ENCODE measurements at regions of chr3 and their contacts with region 1.

Region 1: DNA sequence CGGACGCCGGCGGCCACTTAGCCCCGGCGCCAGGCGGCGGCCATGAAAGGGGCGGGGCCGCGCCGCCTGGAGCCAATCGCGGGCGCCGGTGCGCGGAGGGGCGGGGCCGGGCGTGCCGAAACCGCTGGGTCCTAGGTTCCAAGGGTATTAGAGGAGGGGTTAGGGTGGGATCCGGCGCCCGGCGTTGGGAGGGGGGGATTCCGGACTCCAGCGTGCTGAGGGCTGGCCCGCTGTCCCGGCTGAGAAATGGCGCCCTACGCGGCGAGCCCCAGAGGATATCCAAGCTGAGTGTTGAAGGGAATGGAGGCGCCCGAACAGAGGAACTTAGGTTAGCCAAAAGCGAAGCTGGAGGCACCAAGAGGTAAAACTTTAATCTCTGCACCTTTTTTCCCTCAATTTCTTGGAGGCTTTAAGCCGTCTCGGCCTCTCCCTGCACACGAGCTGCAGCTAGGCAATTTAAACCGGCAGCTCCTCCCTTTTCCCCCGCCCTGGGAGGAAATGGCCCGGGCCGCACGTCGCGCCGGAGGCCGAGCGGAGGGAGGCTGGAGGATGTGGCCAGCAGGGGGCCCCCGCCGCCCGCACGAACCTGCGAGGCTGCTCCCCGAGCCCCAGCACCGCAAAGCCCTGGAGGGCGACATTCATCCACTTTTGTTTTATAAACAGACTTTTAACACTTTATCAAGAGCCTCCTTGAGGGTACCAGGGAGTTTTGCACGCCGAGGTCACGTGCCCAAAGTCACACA is at the start of gene XXYLT1:
- DNase-seq: peak; percentile 92
- H3K4me3 Mint-ChIP-seq: peak within 1 kb of the TSS; percentile 82
- H3K27ac Mint-ChIP-seq: peak within 1 kb of the TSS; percentile 85
- H3K4me1 Mint-ChIP-seq: peaks cover 22% of the 10 kb centered on the region
- H3K27me3 Mint-ChIP-seq: no peaks in the 10 kb centered on the region
- total RNA-seq, gene XXYLT1: 5.0 to 5.6 TPM

Region 2: DNA sequence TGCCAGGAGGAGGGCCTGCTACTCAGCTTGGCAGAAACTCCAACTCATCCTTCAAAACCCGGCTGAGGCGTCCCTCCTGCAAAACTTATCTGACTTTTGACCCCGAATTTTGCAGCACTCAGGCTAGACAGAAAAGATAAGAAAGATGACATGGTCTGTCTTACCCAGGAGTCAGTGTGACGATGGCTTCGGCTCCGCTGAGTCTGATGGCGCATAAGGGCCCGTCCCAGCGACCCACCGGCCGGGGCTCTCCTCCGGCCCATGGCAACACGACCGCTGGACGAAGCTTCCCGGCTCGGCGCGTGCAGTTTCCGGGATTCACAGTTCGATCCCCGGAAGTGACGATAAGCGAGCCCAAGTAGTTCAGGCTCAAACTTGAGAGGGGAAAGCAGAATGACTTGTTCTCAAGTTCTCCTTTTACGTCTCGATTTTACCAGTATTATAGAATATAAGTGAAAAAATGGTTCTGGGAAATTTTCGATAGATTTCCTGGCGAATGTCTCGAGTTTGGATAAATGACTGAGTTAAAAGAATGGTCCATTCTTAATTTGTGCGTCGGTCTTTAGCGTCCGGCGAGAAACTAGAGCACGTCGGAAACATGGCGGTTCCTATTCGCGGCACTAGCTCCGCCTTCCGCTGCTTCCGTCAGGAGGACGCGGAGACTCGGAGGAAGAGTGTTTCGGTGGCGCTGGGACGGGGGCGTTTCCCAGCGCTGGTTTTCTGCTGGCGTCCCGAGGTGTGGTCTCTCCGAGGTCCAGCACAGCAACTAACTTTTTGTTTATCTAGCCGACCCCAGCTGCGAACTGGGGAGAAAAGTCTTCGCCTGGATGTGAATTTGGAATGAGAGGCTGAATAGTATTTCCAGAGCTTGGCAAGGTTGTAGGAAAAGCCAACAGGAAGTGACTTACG is 599.1 kb before region 1 on chr3 and contains the start of gene LSG1:
- CTCF ChIA-PET with region 1: interaction called, 32 read pairs
- POLR2A ChIA-PET with region 1: interaction called, 10 read pairs
- DNase-seq: peak; percentile 91
- H3K4me3 Mint-ChIP-seq: peak within 1 kb of the TSS; percentile 96
- H3K27ac Mint-ChIP-seq: peak within 1 kb of the TSS; percentile 93
- H3K4me1 Mint-ChIP-seq: peaks cover 55% of the 10 kb centered on the region
- H3K27me3 Mint-ChIP-seq: peaks cover 3% of the 10 kb centered on the region
- total RNA-seq, gene LSG1: 24.7 to 26.5 TPM

Region 3: DNA sequence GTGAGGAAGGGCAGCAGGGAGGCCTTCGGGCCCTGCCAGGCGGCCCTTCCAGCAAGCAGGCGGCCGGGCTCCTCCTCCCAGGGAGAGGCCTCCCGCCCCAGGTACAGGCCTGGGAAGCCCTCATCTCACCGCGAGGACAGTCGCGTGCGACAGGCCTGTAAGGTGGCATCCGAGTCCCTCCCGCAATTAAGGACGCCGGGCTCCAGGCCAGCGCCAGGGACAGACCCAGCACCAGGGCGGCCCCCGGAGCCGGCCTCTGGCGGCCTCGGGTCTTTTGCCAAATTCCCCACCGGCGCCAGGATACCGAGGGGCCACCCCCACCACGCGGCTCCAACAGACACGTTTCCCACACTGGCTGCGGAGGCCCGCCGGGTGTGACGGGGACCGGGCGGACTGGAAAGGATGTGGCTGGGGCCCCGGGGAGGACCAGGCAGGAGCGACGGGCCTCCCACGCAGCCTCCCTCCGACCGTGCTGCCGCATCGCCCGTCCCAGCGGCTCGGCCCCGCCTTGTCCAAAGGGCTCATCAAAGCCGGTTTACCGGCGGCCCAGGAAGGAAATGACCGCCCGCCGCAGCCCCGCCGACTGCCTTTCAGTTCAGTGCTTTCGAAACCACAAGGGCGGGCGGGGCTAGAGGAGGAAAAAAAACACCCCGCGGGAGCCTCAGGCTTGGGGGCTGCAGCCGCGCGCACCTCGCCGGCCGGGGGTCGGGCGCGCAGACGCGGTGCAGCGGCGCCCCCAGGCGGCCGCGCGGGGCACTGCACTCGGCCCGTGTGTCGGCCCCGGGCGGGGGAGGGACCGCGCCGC is 11.6 kb before region 1 on chr3:
- CTCF ChIA-PET with region 1: interaction called, 74 read pairs
- POLR2A ChIA-PET with region 1: interaction called, 20 read pairs
- DNase-seq: peak; percentile 84
- H3K4me3 Mint-ChIP-seq: peak overlapping the region; percentile 48
- H3K27ac Mint-ChIP-seq: no peak overlapping the region
- H3K4me1 Mint-ChIP-seq: peaks cover 24% of the 10 kb centered on the region
- H3K27me3 Mint-ChIP-seq: no peaks in the 10 kb centered on the region

Region 4: GRCh38 chr3:195442573-195443390 is 171.5 kb after region 1 on chr3 and contains the start of gene ACAP2:
- CTCF ChIA-PET with region 1: interaction called, 32 read pairs
- POLR2A ChIA-PET with region 1: interaction called, 9 read pairs
- DNase-seq: peak; percentile 99
- H3K4me3 Mint-ChIP-seq: peak within 1 kb of the TSS; percentile 94
- H3K27ac Mint-ChIP-seq: peak within 1 kb of the TSS; percentile 92
- H3K4me1 Mint-ChIP-seq: peaks cover 44% of the 10 kb centered on the region
- H3K27me3 Mint-ChIP-seq: no peaks in the 10 kb centered on the region
- total RNA-seq, gene ACAP2: 76.0 to 77.4 TPM

Region 5: GRCh38 chr3:195508185-195508584 is 236.9 kb after region 1 on chr3:
- CTCF ChIA-PET with region 1: interaction called, 36 read pairs
- POLR2A ChIA-PET with region 1: interaction called, 3 read pairs
- DNase-seq: no peak
- H3K4me3 Mint-ChIP-seq: no peak overlapping the region
- H3K27ac Mint-ChIP-seq: no peak overlapping the region
- H3K4me1 Mint-ChIP-seq: peaks cover 3% of the 10 kb centered on the region
- H3K27me3 Mint-ChIP-seq: no peaks in the 10 kb centered on the region

Region 6: GRCh38 chr3:195532834-195533233 is 261.5 kb after region 1 on chr3:
- CTCF ChIA-PET with region 1: interaction called, 194 read pairs
- POLR2A ChIA-PET with region 1: interaction called, 4 read pairs
- DNase-seq: no peak
- H3K4me3 Mint-ChIP-seq: no peak overlapping the region
- H3K27ac Mint-ChIP-seq: no peak overlapping the region
- H3K4me1 Mint-ChIP-seq: peaks cover 43% of the 10 kb centered on the region
- H3K27me3 Mint-ChIP-seq: no peaks in the 10 kb centered on the region

Region 7: DNA sequence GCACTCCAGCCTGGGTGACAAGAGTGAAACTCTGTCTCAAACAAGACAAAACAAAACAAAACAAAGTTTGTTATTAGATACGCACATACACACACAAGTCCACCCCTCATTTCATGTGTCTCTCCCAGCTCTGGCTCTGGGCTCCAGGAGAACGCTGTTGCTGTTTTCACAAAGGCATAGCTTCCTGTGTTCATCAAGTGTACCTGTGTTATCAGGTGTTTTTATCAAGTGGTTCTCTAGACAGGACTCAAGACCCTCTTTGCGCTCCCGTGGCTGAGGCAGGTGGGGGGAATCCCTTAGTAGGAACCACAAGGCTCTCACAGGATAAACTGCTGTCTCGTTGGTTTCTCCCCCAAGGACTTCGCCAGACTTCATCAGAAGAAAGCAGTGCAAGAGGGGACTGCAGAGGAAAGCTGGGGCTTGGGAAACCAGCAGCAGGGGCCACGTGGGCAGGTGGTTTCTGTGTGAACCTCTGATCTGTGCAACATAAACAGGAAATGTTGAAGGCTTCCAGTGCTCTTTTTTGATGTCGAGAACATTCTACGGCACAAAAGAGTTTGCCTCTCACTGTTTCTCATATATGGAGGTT is 278.7 kb after region 1 on chr3:
- CTCF ChIA-PET with region 1: interaction called, 44 read pairs
- POLR2A ChIA-PET with region 1: interaction called, 4 read pairs
- DNase-seq: peak; percentile 85
- H3K4me3 Mint-ChIP-seq: peak overlapping the region; percentile 71
- H3K27ac Mint-ChIP-seq: peak overlapping the region; percentile 95
- H3K4me1 Mint-ChIP-seq: peaks cover 66% of the 10 kb centered on the region
- H3K27me3 Mint-ChIP-seq: no peaks in the 10 kb centered on the region